Dorsolateral prefrontal cortex (tissue), 120 donors: ENCODE measurements at regions of chr16 and their contacts with region 1.

Region 1: DNA sequence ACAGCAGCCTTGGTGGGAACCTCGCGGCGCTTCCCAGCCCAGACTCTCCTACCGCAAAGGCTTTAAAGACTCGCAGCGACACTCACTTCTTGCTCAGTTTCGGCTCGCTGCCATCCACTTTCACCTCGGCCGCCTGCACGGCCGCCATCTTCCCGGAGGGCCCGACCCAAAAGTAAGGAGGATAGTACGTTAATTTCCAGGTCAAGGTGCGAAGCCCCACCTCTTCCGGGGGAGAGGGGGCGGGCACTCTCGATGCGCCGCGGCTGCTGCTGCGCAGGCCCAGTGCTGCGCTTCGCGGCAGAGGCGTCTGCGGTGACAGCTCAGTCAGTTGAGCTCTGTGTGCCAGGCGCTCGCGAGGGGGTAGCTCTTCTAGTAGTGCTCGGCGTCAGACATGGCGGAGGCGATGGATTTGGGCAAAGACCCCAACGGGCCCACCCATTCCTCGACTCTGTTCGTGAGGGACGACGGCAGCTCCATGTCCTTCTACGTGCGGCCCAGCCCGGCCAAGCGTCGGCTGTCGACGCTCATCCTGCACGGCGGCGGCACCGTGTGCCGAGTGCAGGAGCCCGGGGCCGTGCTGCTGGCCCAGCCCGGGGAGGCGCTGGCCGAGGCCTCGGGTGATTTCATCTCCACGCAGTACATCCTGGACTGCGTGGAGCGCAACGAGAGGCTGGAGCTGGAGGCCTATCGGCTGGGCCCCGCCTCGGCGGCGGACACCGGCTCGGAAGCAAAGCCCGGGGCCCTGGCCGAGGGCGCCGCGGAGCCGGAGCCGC is at the starts of genes KARS1 and TERF2IP:
- DNase-seq: peak; percentile 90 to 97 (median 94)
- H3K4me3 ChIP-seq: peak within 1 kb of the TSS; percentile 76 to 100 (median 97)
- H3K27ac ChIP-seq: peak within 1 kb of the TSS; percentile 92 to 100 (median 99)
- H3K27me3 ChIP-seq: no peaks in the 10 kb centered on the region
- CTCF ChIP-seq: peak in 23 of 56 donors; percentile 7 to 48 (median 27)
- total RNA-seq, gene KARS1: 39.4 to 84.1 (median 60.8) TPM
- total RNA-seq, gene TERF2IP: 104 to 284 (median 207) TPM

Region 2: DNA sequence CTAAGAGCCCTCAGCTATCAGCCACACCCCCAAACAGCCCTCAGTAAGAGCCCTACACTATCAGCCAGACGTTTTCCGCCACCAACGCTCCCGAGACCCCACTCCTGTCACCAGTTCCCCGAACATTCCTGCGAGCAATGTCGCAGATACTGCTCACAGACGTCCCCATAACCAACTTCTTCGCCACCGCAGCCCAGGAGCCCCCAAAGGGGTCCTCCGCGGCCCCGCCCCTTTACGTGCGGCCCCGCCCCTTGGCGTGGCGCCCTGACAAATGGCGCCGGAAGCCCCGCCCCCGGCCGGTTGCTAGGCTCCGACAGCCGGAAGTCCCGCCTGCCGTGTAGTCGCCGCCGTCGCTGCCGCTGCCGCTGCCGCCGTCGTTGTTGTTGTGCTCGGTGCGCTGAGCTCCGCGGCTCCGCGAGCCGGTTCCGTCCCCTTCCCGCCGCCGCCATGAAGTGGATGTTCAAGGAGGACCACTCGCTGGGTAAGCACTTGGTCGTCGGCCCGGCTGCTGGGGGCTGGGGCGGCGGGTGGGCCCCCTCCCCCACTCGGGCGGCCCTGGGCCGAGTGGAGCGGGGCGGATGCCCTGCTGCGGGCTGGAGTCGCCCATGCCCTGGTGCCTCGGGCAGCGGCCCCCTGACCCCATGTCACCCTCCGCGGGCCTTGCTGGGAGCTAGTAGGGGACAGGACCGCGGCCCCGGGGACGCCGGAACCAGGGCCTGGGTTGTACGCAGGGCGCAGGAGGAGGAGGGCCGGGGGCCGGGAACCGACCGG is 81.5 kb before region 1 on chr16 and contains the start of gene GABARAPL2:
- intact Hi-C with region 1: loop called in 1 of 2 experiments (anchors 5 kb)
- DNase-seq: peak; percentile 75 to 94 (median 84)
- H3K4me3 ChIP-seq: peak within 1 kb of the TSS; percentile 58 to 100 (median 97)
- H3K27ac ChIP-seq: peak within 1 kb of the TSS in 52 of 59 donors; percentile 19 to 91 (median 78)
- H3K27me3 ChIP-seq: no peaks in the 10 kb centered on the region
- CTCF ChIP-seq: peak in 10 of 56 donors; percentile 5 to 27 (median 19)
- total RNA-seq, gene GABARAPL2: 171 to 307 (median 259) TPM

Region 3: GRCh38 chr16:77190478-77191258 is 1543.0 kb after region 1 on chr16 and contains the start of gene MON1B:
- intact Hi-C with region 1: loop called in 1 of 2 experiments (anchors 2 kb)
- DNase-seq: peak; percentile 93 to 99 (median 98)
- H3K4me3 ChIP-seq: peak within 1 kb of the TSS; percentile 68 to 100 (median 94)
- H3K27ac ChIP-seq: peak within 1 kb of the TSS; percentile 85 to 100 (median 98)
- H3K27me3 ChIP-seq: no peaks in the 10 kb centered on the region
- CTCF ChIP-seq: peak in 26 of 56 donors; percentile 5 to 54 (median 27)
- total RNA-seq, gene MON1B: 37.4 to 82.2 (median 54.8) TPM